Activated CD4-positive, alpha-beta T cell treated with anti-CD3 and anti-CD28 coated beads, Interleukin-2, amount 10 ng/mL, durations not matched to agents 24 days and 14 days (primary cell): ENCODE measurements at regions of chr18 and their contacts with region 1.

Region 1: GRCh38 chr18:67515945-67516538 is 478 bp downstream of the DSEL start:
- DNase-seq: peak; percentile 81
- H3K4me3 Mint-ChIP-seq: peak overlapping the region; percentile 82
- H3K27ac Mint-ChIP-seq: no peak overlapping the region
- H3K4me1 Mint-ChIP-seq: peaks cover 17% of the 10 kb centered on the region
- H3K27me3 Mint-ChIP-seq: peaks cover 55% of the 10 kb centered on the region

Region 2: GRCh38 chr18:67417864-67418523 is 98.0 kb before region 1 on chr18:
- intact Hi-C with region 1: loop called (anchors 5 kb)
- DNase-seq: peak; percentile 78
- H3K4me3 Mint-ChIP-seq: peak overlapping the region; percentile 24
- H3K27ac Mint-ChIP-seq: no peak overlapping the region
- H3K4me1 Mint-ChIP-seq: peaks cover 7% of the 10 kb centered on the region
- H3K27me3 Mint-ChIP-seq: peaks cover 2% of the 10 kb centered on the region

Region 3: GRCh38 chr18:68714609-68715496 is 1198.8 kb after region 1 on chr18 and contains the start of gene TMX3:
- intact Hi-C with region 1: loop called (anchors 10 kb)
- DNase-seq: peak; percentile 98
- H3K4me3 Mint-ChIP-seq: peak within 1 kb of the TSS; percentile 94
- H3K27ac Mint-ChIP-seq: peak within 1 kb of the TSS; percentile 90
- H3K4me1 Mint-ChIP-seq: peaks cover 30% of the 10 kb centered on the region
- H3K27me3 Mint-ChIP-seq: no peaks in the 10 kb centered on the region
- total RNA-seq, gene TMX3: 65.6 and 67.1 TPM in 2 replicates